ENCODE measurements at regions of chr3 and their contacts with region 1.

Region 1: GRCh38 chr3:135018149-135018923 is 223.3 kb downstream of the EPHB1 start:
- DNase-seq: no peak
- ATAC-seq: no peak
- H3K4me3 ChIP-seq: no peak overlapping the region
- H3K27ac ChIP-seq: no peak overlapping the region
- H3K4me1 ChIP-seq: no peaks in the 10 kb centered on the region
- H3K27me3 ChIP-seq: 0 out of 2 replicates have a peak, but pooled peaks cover 3% of the 10 kb centered on the region
- CTCF ChIP-seq: no peak

Region 2: DNA sequence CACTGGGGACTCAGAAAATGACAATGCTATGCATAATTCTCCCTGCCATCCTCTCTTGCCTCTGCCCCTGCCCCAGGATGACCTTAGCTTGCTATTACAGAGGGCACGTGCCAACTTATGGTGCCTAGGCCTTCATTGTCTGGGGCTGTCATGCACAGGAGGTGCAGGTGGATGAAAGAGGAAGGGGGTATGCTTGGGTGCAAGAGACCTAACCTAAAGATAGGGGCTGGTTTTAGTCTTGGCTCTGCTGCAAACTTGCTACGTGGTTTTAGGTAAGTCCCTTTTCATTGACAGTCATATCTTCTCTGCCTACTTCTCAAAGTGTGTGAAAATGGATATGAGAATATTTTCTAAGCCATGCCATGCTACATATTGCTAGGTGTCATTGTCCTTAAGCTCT is 61.9 kb before region 1 on chr3:
- CTCF ChIA-PET with region 1: no interaction called
- POLR2A ChIA-PET with region 1: no interaction called
- in situ Hi-C with region 1: no loop called
- intact Hi-C with region 1: no loop called
- DNase-seq: no peak
- ATAC-seq: no peak
- H3K4me3 ChIP-seq: no peak overlapping the region
- H3K27ac ChIP-seq: no peak overlapping the region
- H3K4me1 ChIP-seq: no peaks in the 10 kb centered on the region
- H3K27me3 ChIP-seq: no peaks in the 10 kb centered on the region; the same call in 1 of the 2 replicates
- CTCF ChIP-seq: no peak

Region 3: DNA sequence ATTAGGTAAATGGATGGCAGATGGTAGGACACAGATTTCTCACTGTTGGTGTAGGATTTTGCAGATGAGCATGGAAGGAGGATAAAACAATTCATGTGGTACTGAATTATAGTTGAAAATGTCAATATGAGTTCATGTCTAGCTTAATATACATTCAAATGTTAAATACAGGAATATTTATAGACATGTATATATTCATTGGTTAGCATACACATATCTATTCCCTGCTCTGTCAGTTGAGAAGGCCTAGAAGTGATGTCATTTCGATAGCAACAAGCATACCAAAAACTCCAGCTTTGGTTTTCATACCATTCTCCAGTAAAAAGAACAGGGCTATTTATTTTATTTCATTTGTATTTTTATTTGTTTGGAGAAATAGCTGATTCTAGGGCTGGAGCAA is 273.8 kb after region 1 on chr3:
- CTCF ChIA-PET with region 1: interaction called, 12 read pairs
- POLR2A ChIA-PET with region 1: no interaction called
- in situ Hi-C with region 1: no loop called
- intact Hi-C with region 1: no loop called
- DNase-seq: no peak
- ATAC-seq: no peak
- H3K4me3 ChIP-seq: no peak overlapping the region
- H3K27ac ChIP-seq: no peak overlapping the region
- H3K4me1 ChIP-seq: no peaks in the 10 kb centered on the region
- H3K27me3 ChIP-seq: no peaks in the 10 kb centered on the region
- CTCF ChIP-seq: no peak